Stomach (tissue), 19 donors: ENCODE measurements at regions of chr2 and their contacts with region 1.

Region 1: DNA sequence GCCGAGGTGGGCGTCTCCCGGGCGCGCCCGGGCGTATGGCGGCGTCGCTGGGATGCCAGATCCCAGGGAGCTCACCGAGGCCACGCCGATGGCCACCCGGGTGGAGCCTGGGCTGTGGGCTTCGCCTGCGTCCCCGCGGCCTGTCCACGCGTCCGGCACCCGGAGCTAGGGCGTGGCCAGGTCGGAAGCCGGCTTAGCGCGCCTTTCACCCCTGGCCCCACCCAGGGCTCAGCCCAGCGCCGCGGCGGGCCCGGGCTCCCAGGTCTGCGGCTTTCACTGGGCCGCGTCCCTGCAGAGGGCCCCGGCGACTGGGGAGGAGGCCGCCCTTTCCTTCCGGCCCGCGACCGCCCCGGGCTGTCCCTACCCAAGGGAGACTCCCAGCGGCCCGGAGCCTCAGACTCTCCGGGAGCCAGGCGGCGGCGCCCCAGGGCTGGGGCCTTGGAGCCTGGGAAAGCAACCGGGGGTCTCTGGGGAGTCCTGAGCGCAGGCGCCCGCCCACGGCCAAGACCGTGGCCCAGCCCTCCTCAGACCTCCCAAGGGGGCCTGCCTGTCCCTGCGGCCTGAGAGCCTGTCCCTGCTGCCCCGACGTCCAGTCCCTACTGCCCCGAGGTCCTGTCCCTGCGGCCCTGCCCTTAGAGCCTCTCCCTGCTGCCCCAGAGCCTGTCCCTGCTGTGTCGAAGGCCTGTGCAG is 36.3 kb upstream of the ITM2C start:
- DNase-seq: peak; percentile 34 to 70
- H3K4me3 ChIP-seq: peak overlapping the region; percentile 37 to 53 (median 42)
- H3K27ac ChIP-seq: no peak overlapping the region
- H3K4me1 ChIP-seq: peaks cover 9 to 22% (median 20%) of the 10 kb centered on the region in 4 donors
- H3K27me3 ChIP-seq: peaks cover 0 to 46% (median 16%) of the 10 kb centered on the region in 3 donors
- CTCF ChIP-seq: no peak
- EP300 ChIP-seq: no peak
- POLR2A ChIP-seq: no peak

Region 2: DNA sequence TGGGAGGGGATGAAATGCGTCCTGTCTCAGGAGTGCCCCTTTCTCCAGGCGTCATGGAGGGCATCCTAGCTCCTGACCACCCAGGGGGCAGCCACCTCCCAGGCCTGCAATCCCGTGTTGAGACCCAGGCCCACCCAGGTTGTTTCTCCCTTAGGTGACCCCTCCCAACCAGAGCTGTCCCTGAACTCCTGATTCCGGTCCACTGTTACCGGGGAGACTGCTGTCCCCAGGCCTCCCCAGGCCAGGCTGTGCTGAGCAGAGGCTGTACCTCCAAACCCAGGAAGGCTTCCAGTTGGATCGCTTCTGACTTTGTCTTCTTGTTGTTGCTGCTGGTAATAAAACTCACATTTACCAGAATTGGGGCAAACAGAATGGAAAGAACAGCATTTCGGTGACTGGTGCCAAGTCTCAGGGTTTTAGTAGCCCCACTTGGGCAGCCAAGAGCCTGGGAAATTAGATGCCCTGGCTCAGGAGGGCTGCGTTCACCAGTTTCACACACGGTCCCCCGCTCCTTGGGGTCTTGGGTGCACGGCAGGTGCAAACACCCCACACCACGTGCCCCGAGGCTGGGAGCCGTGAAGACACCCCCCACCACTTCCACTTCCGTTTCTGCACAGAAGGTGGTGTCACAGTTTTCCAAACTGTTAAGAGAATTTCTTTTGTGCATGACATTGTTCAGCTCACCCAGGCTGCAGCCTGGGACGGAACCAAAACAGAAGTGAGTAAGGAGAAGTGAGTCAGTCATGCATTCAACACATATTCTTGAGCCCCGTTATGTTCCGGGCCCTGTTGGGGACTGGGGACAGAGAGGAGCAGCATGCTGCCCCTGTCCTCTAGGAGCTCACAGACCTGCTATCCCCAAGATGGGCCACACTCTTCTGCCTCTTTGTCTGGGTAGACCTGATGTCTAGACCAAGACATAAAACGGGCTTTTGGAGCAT is 65.7 kb after region 1 on chr2:
- intact Hi-C with region 1: no loop called
- DNase-seq: no peak
- H3K4me3 ChIP-seq: no peak overlapping the region
- H3K27ac ChIP-seq: no peak overlapping the region
- H3K4me1 ChIP-seq: peaks cover 0 to 12% (median 2%) of the 10 kb centered on the region in 4 donors
- H3K27me3 ChIP-seq: peaks cover 0 to 16% (median 0%) of the 10 kb centered on the region in 3 donors
- CTCF ChIP-seq: no peak
- EP300 ChIP-seq: no peak
- POLR2A ChIP-seq: no peak

Region 3: DNA sequence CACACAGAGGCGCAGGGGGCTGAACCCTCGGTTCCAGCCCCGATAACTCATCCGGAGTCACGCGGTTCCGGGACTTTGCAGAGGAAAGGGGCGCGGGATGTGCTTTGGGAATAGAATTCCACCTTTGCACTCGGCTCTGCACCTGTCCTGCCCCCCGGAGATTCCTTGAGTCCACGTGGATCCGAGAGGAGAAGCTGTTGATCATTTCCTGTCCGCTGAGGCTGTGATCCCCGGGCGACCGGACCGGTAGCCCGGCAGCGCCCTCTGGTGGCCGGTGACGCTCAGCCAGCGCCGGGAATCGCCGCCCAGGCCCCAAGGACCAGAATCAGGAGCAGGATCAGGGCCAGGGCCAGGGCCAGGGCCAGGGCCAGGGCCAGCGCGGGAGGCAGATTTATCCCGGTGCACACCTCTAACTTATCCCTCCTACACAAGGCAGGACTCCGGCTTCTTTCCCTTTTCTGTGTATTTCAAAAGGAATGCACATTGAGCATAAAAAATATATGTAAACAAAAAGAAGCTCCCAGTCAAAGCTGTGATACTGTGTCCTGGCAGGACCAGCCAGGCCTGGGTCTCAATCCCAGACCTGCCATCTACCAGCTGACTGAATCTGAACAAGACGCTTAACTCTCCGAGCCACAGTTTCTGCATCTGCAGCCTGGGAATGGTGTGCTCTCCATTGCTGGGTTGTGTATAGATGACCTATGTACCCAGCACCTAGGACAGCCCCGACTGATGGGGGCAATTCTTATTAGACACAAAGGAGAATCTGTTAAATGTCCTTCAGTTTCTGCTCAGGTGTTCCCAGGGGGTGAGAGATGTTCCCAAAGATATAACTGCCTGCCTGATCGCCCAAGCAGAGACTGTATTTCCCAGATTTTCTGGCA is 159.0 kb after region 1 on chr2:
- intact Hi-C with region 1: loop called (anchors 5 kb)
- DNase-seq: peak; percentile 87 to 92
- H3K4me3 ChIP-seq: peak overlapping the region; percentile 35 to 57 (median 44)
- H3K27ac ChIP-seq: no peak overlapping the region
- H3K4me1 ChIP-seq: peaks cover 5 to 7% (median 6%) of the 10 kb centered on the region in 4 donors
- H3K27me3 ChIP-seq: peaks cover 9 to 39% (median 11%) of the 10 kb centered on the region in 3 donors
- CTCF ChIP-seq: peak in 5 of 7 experiments; percentile 67 to 95 (median 87)
- EP300 ChIP-seq: no peak
- POLR2A ChIP-seq: no peak